H1 (cell line): ENCODE measurements at regions of chr14 and their contacts with region 1.

Region 1: GRCh38 chr14:51750542-51750941 is 98.8 kb downstream of the FRMD6 start:
- DNase-seq: peak; percentile 43 to 64
- H3K4me3 ChIP-seq: no peak overlapping the region
- H3K27ac ChIP-seq: no peak overlapping the region
- H3K4me1 ChIP-seq: no peaks in the 10 kb centered on the region
- H3K27me3 ChIP-seq: no peaks in the 10 kb centered on the region
- CTCF ChIP-seq: peak; percentile 15 to 56 (median 56)
- EP300 ChIP-seq: no peak
- POLR2A ChIP-seq: no peak
- RAD21 ChIP-seq: peak; percentile 70 to 72

Region 2: GRCh38 chr14:51283402-51284085 is 467.0 kb before region 1 on chr14:
- CTCF ChIA-PET with region 1: interaction called, 24 read pairs
- POLR2A ChIA-PET with region 1: no interaction called
- DNase-seq: no peak
- H3K4me3 ChIP-seq: no peak overlapping the region
- H3K27ac ChIP-seq: no peak overlapping the region
- H3K4me1 ChIP-seq: no peaks in the 10 kb centered on the region
- H3K27me3 ChIP-seq: no peaks in the 10 kb centered on the region
- CTCF ChIP-seq: peak in 2 of 3 experiments; percentile 72 to 76; a peak in 2 of 4 replicates
- EP300 ChIP-seq: no peak
- POLR2A ChIP-seq: no peak
- RAD21 ChIP-seq: peak; percentile 81 to 82

Region 3: GRCh38 chr14:51369814-51370213 is 380.7 kb before region 1 on chr14:
- CTCF ChIA-PET with region 1: interaction called, 19 read pairs
- POLR2A ChIA-PET with region 1: no interaction called
- DNase-seq: peak in 1 of 2 experiments; percentile 58
- H3K4me3 ChIP-seq: no peak overlapping the region
- H3K27ac ChIP-seq: no peak overlapping the region
- H3K4me1 ChIP-seq: peaks cover 0 to 5% (median 0%) of the 10 kb centered on the region in 4 experiments; a peak in 3 of 7 replicates
- H3K27me3 ChIP-seq: no peaks in the 10 kb centered on the region
- CTCF ChIP-seq: peak; percentile 50 to 68 (median 53)
- EP300 ChIP-seq: no peak
- POLR2A ChIP-seq: no peak
- RAD21 ChIP-seq: peak; percentile 77 to 81

Region 4: DNA sequence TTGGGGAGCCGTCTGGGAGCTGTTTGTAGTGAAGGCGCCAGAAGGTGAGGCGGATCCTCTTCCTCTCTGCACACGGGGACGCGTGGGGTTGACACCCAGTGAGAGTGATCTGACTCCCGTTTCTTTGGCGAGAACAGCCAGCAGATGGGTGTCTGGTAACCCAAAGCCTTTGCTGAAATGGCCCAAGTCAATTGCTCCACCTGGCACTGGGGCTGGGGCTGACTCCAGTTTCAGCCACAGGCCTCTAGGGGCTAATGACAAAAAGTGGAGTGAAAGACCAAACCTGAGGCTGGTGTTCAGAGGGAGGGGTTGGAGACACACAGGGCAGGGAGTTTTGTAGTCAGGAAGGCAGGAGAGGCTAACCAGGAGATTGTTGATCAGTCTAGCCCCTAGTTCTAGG is 11.8 kb before region 1 on chr14:
- CTCF ChIA-PET with region 1: interaction called, 26 read pairs
- POLR2A ChIA-PET with region 1: interaction called, 3 read pairs
- DNase-seq: peak in 1 of 2 experiments; percentile 13
- H3K4me3 ChIP-seq: no peak overlapping the region
- H3K27ac ChIP-seq: no peak overlapping the region
- H3K4me1 ChIP-seq: no peaks in the 10 kb centered on the region
- H3K27me3 ChIP-seq: no peaks in the 10 kb centered on the region
- CTCF ChIP-seq: peak; percentile 31 to 57 (median 55)
- EP300 ChIP-seq: no peak
- POLR2A ChIP-seq: no peak
- RAD21 ChIP-seq: peak; percentile 46 to 53; a peak in 3 of 4 replicates

Region 5: GRCh38 chr14:51792819-51793218 is 42.3 kb after region 1 on chr14:
- CTCF ChIA-PET with region 1: no interaction called
- POLR2A ChIA-PET with region 1: no interaction called
- DNase-seq: no peak
- H3K4me3 ChIP-seq: no peak overlapping the region
- H3K27ac ChIP-seq: no peak overlapping the region
- H3K4me1 ChIP-seq: no peaks in the 10 kb centered on the region
- H3K27me3 ChIP-seq: no peaks in the 10 kb centered on the region
- CTCF ChIP-seq: no peak
- EP300 ChIP-seq: no peak
- POLR2A ChIP-seq: no peak
- RAD21 ChIP-seq: no peak

Region 6: GRCh38 chr14:51846631-51847488 is 96.3 kb after region 1 on chr14:
- CTCF ChIA-PET with region 1: no interaction called
- POLR2A ChIA-PET with region 1: no interaction called
- DNase-seq: peak; percentile 46 to 82
- H3K4me3 ChIP-seq: peak overlapping the region; percentile 21 to 59 (median 42); a peak in 7 of 8 replicates
- H3K27ac ChIP-seq: peak overlapping the region; percentile 89
- H3K4me1 ChIP-seq: peaks cover 5 to 14% (median 10%) of the 10 kb centered on the region in 4 experiments
- H3K27me3 ChIP-seq: no peaks in the 10 kb centered on the region
- CTCF ChIP-seq: no peak
- EP300 ChIP-seq: peak in 1 of 2 experiments; percentile 64; a peak in 1 of 3 replicates
- POLR2A ChIP-seq: no peak
- RAD21 ChIP-seq: no peak

Region 7: GRCh38 chr14:51884086-51884927 is 133.8 kb after region 1 on chr14:
- CTCF ChIA-PET with region 1: no interaction called
- POLR2A ChIA-PET with region 1: no interaction called
- DNase-seq: no peak
- H3K4me3 ChIP-seq: no peak overlapping the region
- H3K27ac ChIP-seq: no peak overlapping the region
- H3K4me1 ChIP-seq: no peaks in the 10 kb centered on the region
- H3K27me3 ChIP-seq: no peaks in the 10 kb centered on the region
- CTCF ChIP-seq: no peak
- EP300 ChIP-seq: no peak
- POLR2A ChIP-seq: no peak
- RAD21 ChIP-seq: no peak